CD8-positive, alpha-beta memory T cell (primary cell): ENCODE measurements at regions of chr9 and their contacts with region 1.

Region 1: GRCh38 chr9:36148311-36149051 is 11.9 kb downstream of the GLIPR2 start:
- DNase-seq: peak; percentile 40 to 89 (median 67)
- H3K4me3 ChIP-seq: no peak overlapping the region
- H3K4me3 Mint-ChIP-seq: peak overlapping the region in 5 of 7 donors; percentile 47 to 75 (median 61)
- H3K27ac ChIP-seq: no peak overlapping the region
- H3K27ac Mint-ChIP-seq: peak overlapping the region; percentile 77 to 97 (median 92)
- H3K4me1 ChIP-seq: peaks cover 96% of the 10 kb centered on the region
- H3K4me1 Mint-ChIP-seq: peaks cover 85 to 96% (median 90%) of the 10 kb centered on the region in 3 donors
- H3K27me3 ChIP-seq: no peaks in the 10 kb centered on the region
- H3K27me3 Mint-ChIP-seq: peaks cover 0 to 3% of the 10 kb centered on the region in 2 donors

Region 2: GRCh38 chr9:36136272-36136893 is 12.1 kb before region 1 on chr9 and contains the start of gene GLIPR2:
- CTCF ChIA-PET with region 1: interaction called, 21 read pairs
- POLR2A ChIA-PET with region 1: interaction called, 12 read pairs
- DNase-seq: peak; percentile 72 to 85 (median 76)
- H3K4me3 ChIP-seq: peak within 1 kb of the TSS; percentile 86
- H3K4me3 Mint-ChIP-seq: peak within 1 kb of the TSS; percentile 87 to 99 (median 96)
- H3K27ac ChIP-seq: peak within 1 kb of the TSS; percentile 69
- H3K27ac Mint-ChIP-seq: peak within 1 kb of the TSS; percentile 85 to 99 (median 98)
- H3K4me1 ChIP-seq: peaks cover 52% of the 10 kb centered on the region
- H3K4me1 Mint-ChIP-seq: peaks cover 48 to 54% (median 52%) of the 10 kb centered on the region in 3 donors
- H3K27me3 ChIP-seq: no peaks in the 10 kb centered on the region
- H3K27me3 Mint-ChIP-seq: no peaks in the 10 kb centered on the region
- total RNA-seq, gene GLIPR2: 17.1 to 17.5 TPM

Region 3: DNA sequence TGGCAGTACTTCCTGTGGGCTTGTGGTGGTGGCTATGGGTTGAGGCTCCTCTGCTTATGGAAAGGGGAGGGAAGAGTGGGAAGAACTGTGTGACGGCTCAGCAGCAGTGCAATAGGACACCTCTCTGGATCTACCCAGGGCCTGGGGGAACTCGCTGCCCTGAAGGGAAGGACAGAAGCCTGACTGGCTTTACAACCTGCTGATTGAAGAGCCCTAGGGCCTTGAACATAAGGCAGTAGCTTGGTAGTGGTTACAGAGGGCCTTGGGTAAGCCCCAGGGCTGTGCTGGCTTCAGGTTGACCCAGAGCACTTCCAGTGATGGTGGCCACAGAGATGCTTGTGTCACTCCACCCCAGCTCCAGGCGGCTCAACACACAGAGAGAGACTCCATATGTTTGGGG is 26.2 kb after region 1 on chr9:
- CTCF ChIA-PET with region 1: no interaction called
- POLR2A ChIA-PET with region 1: no interaction called
- DNase-seq: no peak
- H3K4me3 ChIP-seq: no peak overlapping the region
- H3K4me3 Mint-ChIP-seq: no peak overlapping the region
- H3K27ac ChIP-seq: no peak overlapping the region
- H3K27ac Mint-ChIP-seq: no peak overlapping the region
- H3K4me1 ChIP-seq: no peaks in the 10 kb centered on the region
- H3K4me1 Mint-ChIP-seq: peaks cover 0 to 3% (median 0%) of the 10 kb centered on the region in 3 donors
- H3K27me3 ChIP-seq: no peaks in the 10 kb centered on the region
- H3K27me3 Mint-ChIP-seq: peaks cover 6% of the 10 kb centered on the region in 2 donors